Activated CD4-positive, alpha-beta T cell treated with anti-CD3 and anti-CD28 coated beads, Interleukin-2, amount 10 ng/mL, durations not matched to agents 24 days and 14 days (primary cell): ENCODE measurements at regions of chr2 and their contacts with region 1.

Region 1: GRCh38 chr2:229714736-229715541 is 584 bp upstream of the DNER start:
- DNase-seq: peak; percentile 79
- H3K4me3 Mint-ChIP-seq: peak overlapping the region; percentile 38
- H3K27ac Mint-ChIP-seq: no peak overlapping the region
- H3K4me1 Mint-ChIP-seq: peaks cover 5% of the 10 kb centered on the region
- H3K27me3 Mint-ChIP-seq: peaks cover 74% of the 10 kb centered on the region

Region 2: DNA sequence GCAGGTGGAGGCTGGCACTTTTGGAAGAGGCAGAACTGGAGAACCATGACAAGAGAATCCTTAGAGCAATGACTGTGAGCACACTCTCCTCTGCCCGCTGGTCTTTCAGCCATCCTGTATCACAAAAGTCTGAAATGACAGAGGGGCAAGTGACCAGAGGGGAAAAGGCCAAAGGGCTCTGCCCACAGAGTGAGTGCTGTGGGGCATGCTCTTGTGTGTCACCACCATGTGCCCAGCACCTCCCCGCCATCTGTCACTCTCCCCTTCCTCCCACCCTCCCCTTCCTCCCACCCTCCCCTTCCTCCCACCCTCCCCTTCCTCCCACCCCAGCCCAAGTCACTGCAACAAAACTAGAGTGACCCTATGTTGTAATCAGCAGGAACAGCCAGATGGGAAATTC is 1811.6 kb before region 1 on chr2:
- intact Hi-C with region 1: loop called (anchors 5 kb)
- DNase-seq: no peak
- H3K4me3 Mint-ChIP-seq: no peak overlapping the region
- H3K27ac Mint-ChIP-seq: no peak overlapping the region
- H3K4me1 Mint-ChIP-seq: no peaks in the 10 kb centered on the region
- H3K27me3 Mint-ChIP-seq: no peaks in the 10 kb centered on the region

Region 3: GRCh38 chr2:229748950-229749349 is 34.0 kb after region 1 on chr2:
- intact Hi-C with region 1: no loop called
- DNase-seq: no peak
- H3K4me3 Mint-ChIP-seq: no peak overlapping the region
- H3K27ac Mint-ChIP-seq: no peak overlapping the region
- H3K4me1 Mint-ChIP-seq: peaks cover 2% of the 10 kb centered on the region
- H3K27me3 Mint-ChIP-seq: no peaks in the 10 kb centered on the region